Activated B cell treated with CpG ODN at 0.5 μM for 24 hours (primary cell): ENCODE measurements at regions of chr5 and their contacts with region 1.

Region 1: GRCh38 chr5:171961117-171961516 is 45.3 kb downstream of the FBXW11 start:
- DNase-seq: no peak
- ATAC-seq: peak; percentile 45
- H3K4me3 Mint-ChIP-seq: no peak overlapping the region
- H3K27ac Mint-ChIP-seq: peak overlapping the region; percentile 61
- H3K4me1 Mint-ChIP-seq: peaks cover 92% of the 10 kb centered on the region
- H3K27me3 Mint-ChIP-seq: no peaks in the 10 kb centered on the region
- CTCF ChIP-seq: no peak

Region 2: GRCh38 chr5:171571663-171572062 is 389.5 kb before region 1 on chr5:
- CTCF ChIA-PET with region 1: no interaction called
- POLR2A ChIA-PET with region 1: no interaction called
- intact Hi-C with region 1: no loop called
- DNase-seq: no peak
- ATAC-seq: no peak
- H3K4me3 Mint-ChIP-seq: no peak overlapping the region
- H3K27ac Mint-ChIP-seq: no peak overlapping the region
- H3K4me1 Mint-ChIP-seq: no peaks in the 10 kb centered on the region
- H3K27me3 Mint-ChIP-seq: peaks cover 7% of the 10 kb centered on the region
- CTCF ChIP-seq: no peak

Region 3: GRCh38 chr5:171863930-171864329 is 97.2 kb before region 1 on chr5:
- CTCF ChIA-PET with region 1: no interaction called
- POLR2A ChIA-PET with region 1: no interaction called
- intact Hi-C with region 1: no loop called
- DNase-seq: no peak
- ATAC-seq: no peak
- H3K4me3 Mint-ChIP-seq: no peak overlapping the region
- H3K27ac Mint-ChIP-seq: no peak overlapping the region
- H3K4me1 Mint-ChIP-seq: no peaks in the 10 kb centered on the region
- H3K27me3 Mint-ChIP-seq: no peaks in the 10 kb centered on the region
- CTCF ChIP-seq: no peak

Region 4: DNA sequence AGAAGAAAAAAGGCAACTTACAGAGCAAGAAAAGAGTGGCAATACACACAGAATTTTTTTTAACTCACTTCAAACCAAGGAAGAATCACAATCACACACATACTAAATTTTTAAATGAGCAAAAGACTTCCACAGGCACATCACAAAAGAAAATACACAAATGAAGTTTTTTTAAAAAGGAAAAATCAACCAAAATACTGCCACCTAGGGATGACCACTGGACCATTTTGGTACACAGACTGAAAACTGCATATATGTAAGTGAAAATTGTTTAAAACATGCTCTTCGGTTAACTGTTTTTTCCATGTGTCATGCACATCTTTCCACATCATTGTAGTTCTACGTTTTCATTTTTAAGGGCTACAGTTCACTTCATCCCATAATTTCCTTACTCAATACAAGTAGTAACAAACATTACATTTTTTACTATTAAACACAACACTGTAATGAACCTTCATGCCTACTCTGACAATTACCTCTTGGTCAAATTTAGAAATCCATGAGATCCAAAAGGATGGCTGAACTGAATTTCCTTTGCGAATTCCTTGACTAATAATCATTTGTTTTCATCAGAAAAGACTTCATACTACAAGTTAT is 33.7 kb before region 1 on chr5:
- CTCF ChIA-PET with region 1: no interaction called
- POLR2A ChIA-PET with region 1: no interaction called
- intact Hi-C with region 1: loop called (anchors 5 kb)
- DNase-seq: no peak
- ATAC-seq: no peak
- H3K4me3 Mint-ChIP-seq: no peak overlapping the region
- H3K27ac Mint-ChIP-seq: peak overlapping the region; percentile 4
- H3K4me1 Mint-ChIP-seq: peaks cover 63% of the 10 kb centered on the region
- H3K27me3 Mint-ChIP-seq: no peaks in the 10 kb centered on the region
- CTCF ChIP-seq: no peak

Region 5: GRCh38 chr5:171946000-171946774 is 14.9 kb before region 1 on chr5:
- CTCF ChIA-PET with region 1: no interaction called
- POLR2A ChIA-PET with region 1: no interaction called
- intact Hi-C with region 1: loop called (anchors 2 kb)
- DNase-seq: no peak
- ATAC-seq: no peak
- H3K4me3 Mint-ChIP-seq: no peak overlapping the region
- H3K27ac Mint-ChIP-seq: no peak overlapping the region
- H3K4me1 Mint-ChIP-seq: peaks cover 58% of the 10 kb centered on the region
- H3K27me3 Mint-ChIP-seq: no peaks in the 10 kb centered on the region
- CTCF ChIP-seq: no peak

Region 6: GRCh38 chr5:171978519-171978918 is 17.4 kb after region 1 on chr5:
- CTCF ChIA-PET with region 1: no interaction called
- POLR2A ChIA-PET with region 1: interaction called, 4 read pairs
- intact Hi-C with region 1: loop called (anchors 2 kb)
- DNase-seq: no peak
- ATAC-seq: peak; percentile 81
- H3K4me3 Mint-ChIP-seq: peak overlapping the region; percentile 65
- H3K27ac Mint-ChIP-seq: peak overlapping the region; percentile 86
- H3K4me1 Mint-ChIP-seq: peaks cover 85% of the 10 kb centered on the region
- H3K27me3 Mint-ChIP-seq: no peaks in the 10 kb centered on the region
- CTCF ChIP-seq: no peak